Naive thymus-derived CD4-positive, alpha-beta T cell (primary cell): ENCODE measurements at regions of chr19 and their contacts with region 1.

Region 1: DNA sequence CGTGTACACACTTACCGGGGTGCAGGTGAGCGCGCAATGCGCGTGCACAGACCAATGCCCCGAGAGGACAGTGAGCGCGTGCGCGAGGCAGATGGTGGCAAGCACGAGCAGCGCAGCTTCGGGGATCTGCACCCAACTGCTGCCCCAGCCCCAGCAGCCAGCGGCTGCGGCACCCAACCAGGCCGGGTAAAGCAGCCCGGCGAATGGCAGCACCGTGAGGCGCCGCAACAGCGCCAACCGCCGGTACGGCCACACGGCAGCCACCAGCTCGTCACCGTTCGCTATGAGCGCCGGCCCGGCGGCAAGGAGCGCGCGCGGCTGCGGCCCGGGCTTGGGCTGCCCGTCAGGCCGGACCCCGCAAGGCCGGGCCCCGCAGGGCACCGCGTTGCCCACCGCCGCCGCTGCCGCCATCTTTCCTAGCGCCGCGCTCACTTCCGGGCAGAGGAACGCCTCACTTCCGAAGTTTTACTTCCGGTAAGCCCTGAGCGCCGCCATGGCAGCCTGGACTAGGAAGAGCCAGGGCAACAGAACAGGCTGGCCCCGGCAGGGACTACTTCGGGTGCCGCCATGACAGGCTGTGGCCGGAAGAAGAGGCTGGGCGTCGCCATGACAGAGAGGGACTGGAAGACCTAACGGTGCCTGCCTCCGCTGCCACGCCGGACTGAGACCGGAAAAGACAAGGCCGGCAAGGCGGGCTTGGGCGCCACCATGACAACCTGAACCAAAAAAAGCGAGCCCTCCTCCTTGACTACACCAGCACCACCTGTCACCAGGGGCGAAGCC is at the start of gene ATP13A1:
- DNase-seq: peak; percentile 83 to 96 (median 93)
- ATAC-seq: peak; percentile 85
- H3K4me3 ChIP-seq: peak within 1 kb of the TSS; percentile 96
- H3K4me3 Mint-ChIP-seq: peak within 1 kb of the TSS; percentile 79 to 99 (median 96)
- H3K27ac ChIP-seq: peak within 1 kb of the TSS; percentile 98
- H3K27ac Mint-ChIP-seq: peak within 1 kb of the TSS; percentile 93 to 99 (median 99)
- H3K4me1 ChIP-seq: peaks cover 30 to 32% of the 10 kb centered on the region in 2 donors
- H3K4me1 Mint-ChIP-seq: peaks cover 20 to 44% (median 36%) of the 10 kb centered on the region in 7 donors
- H3K27me3 ChIP-seq: no peaks in the 10 kb centered on the region
- H3K27me3 Mint-ChIP-seq: peaks cover 0 to 3% (median 0%) of the 10 kb centered on the region in 5 donors
- total RNA-seq, gene ATP13A1: 86.5 to 138 (median 98.9) TPM

Region 2: DNA sequence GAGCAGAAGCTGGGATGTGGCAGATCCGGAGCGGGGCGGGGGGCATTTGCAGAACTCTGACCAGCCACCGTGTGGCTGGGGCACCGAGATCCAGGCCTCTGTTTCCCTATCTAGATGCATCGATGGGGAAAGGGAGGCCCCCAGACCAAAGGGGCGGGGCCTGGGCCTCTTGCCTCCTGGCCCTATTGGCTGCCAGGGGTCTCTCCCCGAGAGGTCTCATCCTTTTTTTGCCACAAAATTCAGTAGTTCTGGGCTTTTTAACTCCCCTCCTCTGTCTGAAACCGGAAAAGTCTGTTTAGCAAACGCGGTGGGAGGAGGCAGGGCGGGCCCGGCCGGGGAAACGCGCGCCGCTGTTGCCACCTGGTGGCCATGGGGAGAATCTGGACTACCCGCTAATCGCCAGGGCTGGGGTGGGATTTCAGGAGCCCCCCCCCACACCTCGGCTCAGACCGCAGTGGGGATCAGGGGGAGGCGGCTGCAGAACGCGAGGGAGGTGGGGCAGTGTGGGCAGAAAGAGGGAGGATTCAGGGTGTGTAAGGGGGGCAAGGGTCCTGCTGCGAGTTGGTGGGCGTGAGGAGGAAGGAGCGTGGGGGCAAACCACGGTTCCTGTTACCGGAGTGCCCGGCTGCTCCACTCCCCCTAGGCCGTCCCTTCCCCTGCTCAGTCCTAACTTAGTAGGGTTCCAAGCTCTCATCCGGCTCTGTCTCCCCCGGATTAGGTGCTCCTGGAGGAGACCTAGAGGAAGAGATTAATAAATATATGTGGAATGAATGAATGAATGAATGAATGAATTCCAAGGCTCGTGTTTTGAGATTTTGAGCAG is 1605.0 kb before region 1 on chr19:
- CTCF ChIA-PET with region 1: no interaction called
- POLR2A ChIA-PET with region 1: no interaction called
- intact Hi-C with region 1: no loop called
- DNase-seq: peak; percentile 76 to 88 (median 82)
- ATAC-seq: peak; percentile 97
- H3K4me3 ChIP-seq: peak overlapping the region; percentile 31
- H3K4me3 Mint-ChIP-seq: peak overlapping the region in 8 of 10 donors; percentile 32 to 62 (median 53)
- H3K27ac ChIP-seq: peak overlapping the region; percentile 62
- H3K27ac Mint-ChIP-seq: peak overlapping the region; percentile 71 to 89 (median 86)
- H3K4me1 ChIP-seq: peaks cover 8 to 13% of the 10 kb centered on the region in 2 donors
- H3K4me1 Mint-ChIP-seq: peaks cover 0 to 18% (median 16%) of the 10 kb centered on the region in 7 donors
- H3K27me3 ChIP-seq: no peaks in the 10 kb centered on the region
- H3K27me3 Mint-ChIP-seq: no peaks in the 10 kb centered on the region

Region 3: DNA sequence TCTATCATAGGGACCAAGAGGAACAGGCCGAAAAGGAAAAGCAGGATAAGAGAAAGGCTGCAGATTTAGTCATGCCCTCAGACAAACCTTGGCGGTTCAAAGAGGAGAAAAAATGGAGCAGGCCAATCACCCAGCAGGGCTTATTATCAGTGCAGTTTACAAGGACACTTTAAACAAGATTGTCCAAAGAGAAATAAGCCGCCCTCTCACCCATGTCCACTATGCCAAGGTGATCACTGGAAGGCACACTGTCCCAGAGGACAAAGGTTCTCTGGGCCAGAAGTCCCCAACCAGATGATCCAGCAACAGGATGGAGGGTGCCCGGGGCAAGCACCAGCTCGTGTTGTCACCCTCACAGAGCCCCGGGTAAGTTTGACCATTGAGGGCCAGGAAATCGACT is 1083.1 kb before region 1 on chr19:
- CTCF ChIA-PET with region 1: no interaction called
- POLR2A ChIA-PET with region 1: no interaction called
- intact Hi-C with region 1: no loop called
- DNase-seq: no peak
- ATAC-seq: no peak
- H3K4me3 ChIP-seq: no peak overlapping the region
- H3K4me3 Mint-ChIP-seq: no peak overlapping the region
- H3K27ac ChIP-seq: no peak overlapping the region
- H3K27ac Mint-ChIP-seq: no peak overlapping the region
- H3K4me1 ChIP-seq: peaks cover 0 to 4% of the 10 kb centered on the region in 2 donors
- H3K4me1 Mint-ChIP-seq: peaks cover 2 to 9% (median 3%) of the 10 kb centered on the region in 7 donors
- H3K27me3 ChIP-seq: no peaks in the 10 kb centered on the region
- H3K27me3 Mint-ChIP-seq: no peaks in the 10 kb centered on the region

Region 4: DNA sequence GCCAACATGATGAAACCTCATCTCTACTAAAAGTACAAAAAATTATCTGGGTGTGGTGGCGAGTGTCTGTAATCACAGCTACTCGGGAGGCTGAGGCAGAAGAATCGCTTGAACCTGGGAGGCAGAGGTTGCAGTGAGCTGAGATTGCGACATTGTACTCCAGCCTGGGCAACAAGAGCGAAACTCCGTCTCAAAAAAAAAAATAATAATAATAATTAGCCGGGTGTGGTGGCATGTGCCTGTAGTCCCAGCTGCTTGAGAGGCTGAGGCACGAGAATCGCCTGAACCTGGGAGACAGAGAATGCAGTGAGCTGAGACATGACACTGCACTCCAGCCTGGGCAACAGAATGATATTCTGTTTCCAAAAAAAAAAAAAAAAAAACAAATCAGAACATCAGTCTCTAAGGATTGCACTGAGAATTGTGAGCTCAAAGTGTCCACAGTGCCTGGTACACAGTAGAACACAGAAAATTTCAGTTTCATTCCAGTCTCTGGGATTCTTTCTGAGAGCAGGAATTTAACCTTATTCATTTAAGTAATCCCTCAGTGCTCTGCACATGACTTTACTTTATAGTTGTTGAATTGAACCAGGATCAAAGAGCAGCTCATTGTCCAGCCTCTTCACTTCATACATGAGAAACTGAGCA is 284.0 kb before region 1 on chr19:
- CTCF ChIA-PET with region 1: no interaction called
- POLR2A ChIA-PET with region 1: no interaction called
- intact Hi-C with region 1: no loop called
- DNase-seq: no peak
- ATAC-seq: no peak
- H3K4me3 ChIP-seq: no peak overlapping the region
- H3K4me3 Mint-ChIP-seq: no peak overlapping the region
- H3K27ac ChIP-seq: no peak overlapping the region
- H3K27ac Mint-ChIP-seq: no peak overlapping the region
- H3K4me1 ChIP-seq: peaks cover 0 to under 1% of the 10 kb centered on the region in 2 donors
- H3K4me1 Mint-ChIP-seq: peaks cover 0 to 10% (median 4%) of the 10 kb centered on the region in 7 donors
- H3K27me3 ChIP-seq: no peaks in the 10 kb centered on the region
- H3K27me3 Mint-ChIP-seq: no peaks in the 10 kb centered on the region

Region 5: DNA sequence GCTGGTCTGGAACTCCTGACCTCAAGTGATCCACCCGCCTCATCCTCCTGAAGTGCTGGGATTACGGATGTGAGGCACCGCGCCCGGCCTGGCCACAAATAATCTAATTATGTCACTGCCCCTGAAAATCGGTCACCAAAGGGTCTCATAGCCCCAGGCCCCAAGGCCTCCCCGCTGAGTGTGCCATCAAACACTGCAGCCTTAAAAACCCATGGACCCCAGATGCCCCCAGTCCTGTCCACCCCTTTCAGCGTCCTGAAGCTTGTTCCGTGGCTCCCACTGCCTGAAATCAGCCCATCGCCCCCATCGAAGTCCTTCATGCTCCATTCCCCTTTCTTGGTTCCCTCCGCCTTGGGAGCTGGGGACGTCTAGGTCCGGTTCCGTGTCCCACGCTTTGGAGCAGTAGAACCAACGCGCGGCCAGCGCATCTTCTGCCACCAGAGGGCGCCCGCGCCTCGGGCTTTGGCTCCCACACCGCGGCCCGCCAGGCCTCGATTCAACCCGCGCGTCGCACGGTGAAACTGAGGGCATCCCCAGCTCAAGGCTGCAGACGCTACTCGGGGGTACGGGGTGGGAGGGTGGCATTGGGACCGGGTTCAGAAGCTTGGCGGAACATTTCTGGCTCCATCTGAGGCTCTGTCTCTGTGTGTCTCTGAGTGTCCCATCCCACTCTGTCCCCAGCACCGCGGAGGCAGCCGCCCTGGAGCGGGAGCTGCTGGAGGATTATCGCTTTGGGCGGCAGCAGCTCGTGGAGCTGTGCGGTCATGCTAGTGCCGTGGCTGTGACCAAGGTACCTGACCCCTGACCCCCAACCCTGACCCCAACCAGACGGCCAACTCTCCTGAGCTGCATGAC is 131.3 kb before region 1 on chr19:
- CTCF ChIA-PET with region 1: interaction called, 7 read pairs
- POLR2A ChIA-PET with region 1: interaction called, 21 read pairs
- intact Hi-C with region 1: no loop called
- DNase-seq: peak; percentile 69 to 93 (median 84)
- ATAC-seq: peak; percentile 90
- H3K4me3 ChIP-seq: no peak overlapping the region
- H3K4me3 Mint-ChIP-seq: no peak overlapping the region
- H3K27ac ChIP-seq: no peak overlapping the region
- H3K27ac Mint-ChIP-seq: peak overlapping the region in 8 of 9 donors; percentile 33 to 84 (median 76)
- H3K4me1 ChIP-seq: peaks cover 3 to 9% of the 10 kb centered on the region in 2 donors
- H3K4me1 Mint-ChIP-seq: peaks cover 7 to 22% (median 17%) of the 10 kb centered on the region in 7 donors
- H3K27me3 ChIP-seq: no peaks in the 10 kb centered on the region
- H3K27me3 Mint-ChIP-seq: peaks cover 0 to 6% (median 0%) of the 10 kb centered on the region in 5 donors

Region 6: DNA sequence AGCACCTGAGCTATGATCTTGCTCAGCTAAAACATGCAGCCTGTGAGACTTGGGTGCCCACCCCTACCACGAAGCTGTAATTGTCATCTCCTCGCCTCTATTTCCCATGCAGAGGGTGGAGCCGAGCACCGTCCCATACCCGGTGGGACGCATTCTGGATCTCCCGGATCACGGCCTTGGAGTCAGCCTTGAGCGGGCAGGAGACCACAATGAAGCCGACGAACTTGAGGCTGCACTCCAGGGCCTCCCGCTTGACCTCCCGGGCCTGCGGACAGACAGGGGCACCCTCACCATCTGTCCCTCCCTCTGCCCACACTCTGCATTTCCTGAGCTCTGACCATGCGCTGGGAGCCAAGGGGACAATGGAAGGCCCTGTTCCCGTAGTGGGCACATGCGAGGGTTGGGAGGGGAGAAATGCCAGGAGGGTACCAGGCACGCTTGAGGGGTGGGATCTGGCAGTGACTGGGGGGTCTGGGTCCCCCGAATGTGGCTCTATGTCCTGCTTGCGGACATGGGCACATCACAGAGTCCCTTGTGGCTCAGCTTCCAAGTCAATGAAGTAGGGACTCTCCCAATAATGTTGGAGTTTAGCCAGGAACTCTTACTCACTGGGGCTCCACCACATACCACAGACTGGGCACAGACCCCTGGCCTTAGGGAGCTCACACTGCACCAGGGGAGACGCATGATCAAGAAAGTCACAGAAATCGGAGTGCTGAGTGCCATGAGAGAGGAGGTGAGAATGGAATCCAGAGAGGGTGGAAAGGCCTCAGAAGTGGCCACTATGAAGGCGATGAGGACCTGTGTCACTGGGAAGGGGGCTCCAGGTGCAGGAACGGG is 10.8 kb before region 1 on chr19:
- CTCF ChIA-PET with region 1: interaction called, 3 read pairs
- POLR2A ChIA-PET with region 1: interaction called, 20 read pairs
- intact Hi-C with region 1: no loop called
- DNase-seq: no peak
- ATAC-seq: no peak
- H3K4me3 ChIP-seq: no peak overlapping the region
- H3K4me3 Mint-ChIP-seq: peak overlapping the region in 1 of 10 donors; percentile 16
- H3K27ac ChIP-seq: no peak overlapping the region
- H3K27ac Mint-ChIP-seq: peak overlapping the region in 3 of 9 donors; percentile 47 to 69 (median 68)
- H3K4me1 ChIP-seq: no peaks in the 10 kb centered on the region
- H3K4me1 Mint-ChIP-seq: peaks cover 0 to 6% (median 0%) of the 10 kb centered on the region in 7 donors
- H3K27me3 ChIP-seq: no peaks in the 10 kb centered on the region
- H3K27me3 Mint-ChIP-seq: no peaks in the 10 kb centered on the region

Region 7: DNA sequence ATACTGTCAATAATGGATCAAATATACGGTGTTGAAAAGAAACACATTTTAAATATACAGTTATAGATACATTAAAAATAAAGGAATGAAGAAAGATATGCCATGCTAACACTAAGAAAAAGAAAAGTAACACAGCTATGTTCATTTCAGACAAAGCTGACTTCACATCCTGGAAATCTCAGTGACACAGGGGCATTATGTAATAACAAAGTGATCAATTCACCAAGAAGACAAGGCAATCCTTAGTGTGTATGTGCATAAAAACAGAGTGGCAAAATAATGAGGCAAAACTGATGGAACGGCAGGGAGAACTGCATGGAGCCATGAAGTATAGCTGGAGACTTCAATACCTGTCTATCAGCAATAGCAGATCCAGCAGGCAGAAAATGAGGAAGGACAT is 56.4 kb after region 1 on chr19:
- CTCF ChIA-PET with region 1: no interaction called
- POLR2A ChIA-PET with region 1: interaction called, 30 read pairs
- intact Hi-C with region 1: loop called in 1 of 2 experiments (anchors 5 kb)
- DNase-seq: peak in 4 of 9 donors; percentile 25 to 37 (median 29)
- ATAC-seq: no peak
- H3K4me3 ChIP-seq: no peak overlapping the region
- H3K4me3 Mint-ChIP-seq: peak overlapping the region in 5 of 10 donors; percentile 4 to 69 (median 12)
- H3K27ac ChIP-seq: no peak overlapping the region
- H3K27ac Mint-ChIP-seq: peak overlapping the region in 2 of 9 donors; percentile 11 to 65
- H3K4me1 ChIP-seq: no peaks in the 10 kb centered on the region
- H3K4me1 Mint-ChIP-seq: peaks cover 0 to 15% (median 8%) of the 10 kb centered on the region in 7 donors
- H3K27me3 ChIP-seq: no peaks in the 10 kb centered on the region
- H3K27me3 Mint-ChIP-seq: no peaks in the 10 kb centered on the region

Region 8: DNA sequence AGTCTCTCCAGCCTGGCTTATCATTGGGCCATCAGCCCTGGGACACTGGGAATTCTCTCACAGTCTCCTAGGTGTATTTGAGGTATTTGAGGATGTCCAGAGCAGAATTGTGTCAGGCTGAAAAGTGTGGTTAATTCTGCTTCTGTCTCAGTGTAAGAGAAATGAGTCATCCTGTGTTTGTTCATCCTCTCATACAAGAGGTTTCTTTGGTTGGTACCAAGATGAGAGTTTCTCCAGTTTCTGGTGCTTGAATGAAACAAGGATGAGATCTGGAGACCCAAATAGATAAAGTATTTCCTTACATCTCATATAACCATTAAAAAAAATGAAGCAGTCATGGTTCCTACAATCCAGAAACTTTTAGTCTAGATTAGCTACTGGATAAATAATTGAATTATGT is 209.9 kb after region 1 on chr19:
- CTCF ChIA-PET with region 1: no interaction called
- POLR2A ChIA-PET with region 1: interaction called, 17 read pairs
- intact Hi-C with region 1: no loop called
- DNase-seq: no peak
- ATAC-seq: no peak
- H3K4me3 ChIP-seq: no peak overlapping the region
- H3K4me3 Mint-ChIP-seq: no peak overlapping the region
- H3K27ac ChIP-seq: no peak overlapping the region
- H3K27ac Mint-ChIP-seq: peak overlapping the region in 1 of 9 donors; percentile 9
- H3K4me1 ChIP-seq: peaks cover 1 to 2% of the 10 kb centered on the region in 2 donors
- H3K4me1 Mint-ChIP-seq: peaks cover 9 to 48% (median 39%) of the 10 kb centered on the region in 7 donors
- H3K27me3 ChIP-seq: no peaks in the 10 kb centered on the region
- H3K27me3 Mint-ChIP-seq: no peaks in the 10 kb centered on the region

Region 9: GRCh38 chr19:20167020-20167644 is 503.7 kb after region 1 on chr19 and contains the start of gene ZNF486:
- CTCF ChIA-PET with region 1: no interaction called
- POLR2A ChIA-PET with region 1: interaction called, 5 read pairs
- intact Hi-C with region 1: loop called in 1 of 2 experiments (anchors 10 kb)
- DNase-seq: peak; percentile 73 to 94 (median 90)
- ATAC-seq: peak; percentile 99
- H3K4me3 ChIP-seq: peak within 1 kb of the TSS; percentile 85
- H3K4me3 Mint-ChIP-seq: peak within 1 kb of the TSS; percentile 90 to 99 (median 95)
- H3K27ac ChIP-seq: peak within 1 kb of the TSS; percentile 76
- H3K27ac Mint-ChIP-seq: peak within 1 kb of the TSS; percentile 83 to 98 (median 90)
- H3K4me1 ChIP-seq: peaks cover 9 to 13% of the 10 kb centered on the region in 2 donors
- H3K4me1 Mint-ChIP-seq: peaks cover 13 to 42% (median 36%) of the 10 kb centered on the region in 7 donors
- H3K27me3 ChIP-seq: no peaks in the 10 kb centered on the region
- H3K27me3 Mint-ChIP-seq: no peaks in the 10 kb centered on the region
- total RNA-seq, gene ZNF486: 3.3 to 10.3 (median 4.8) TPM